ENCODE measurements at regions of chr5 and their contacts with region 1.

Region 1: DNA sequence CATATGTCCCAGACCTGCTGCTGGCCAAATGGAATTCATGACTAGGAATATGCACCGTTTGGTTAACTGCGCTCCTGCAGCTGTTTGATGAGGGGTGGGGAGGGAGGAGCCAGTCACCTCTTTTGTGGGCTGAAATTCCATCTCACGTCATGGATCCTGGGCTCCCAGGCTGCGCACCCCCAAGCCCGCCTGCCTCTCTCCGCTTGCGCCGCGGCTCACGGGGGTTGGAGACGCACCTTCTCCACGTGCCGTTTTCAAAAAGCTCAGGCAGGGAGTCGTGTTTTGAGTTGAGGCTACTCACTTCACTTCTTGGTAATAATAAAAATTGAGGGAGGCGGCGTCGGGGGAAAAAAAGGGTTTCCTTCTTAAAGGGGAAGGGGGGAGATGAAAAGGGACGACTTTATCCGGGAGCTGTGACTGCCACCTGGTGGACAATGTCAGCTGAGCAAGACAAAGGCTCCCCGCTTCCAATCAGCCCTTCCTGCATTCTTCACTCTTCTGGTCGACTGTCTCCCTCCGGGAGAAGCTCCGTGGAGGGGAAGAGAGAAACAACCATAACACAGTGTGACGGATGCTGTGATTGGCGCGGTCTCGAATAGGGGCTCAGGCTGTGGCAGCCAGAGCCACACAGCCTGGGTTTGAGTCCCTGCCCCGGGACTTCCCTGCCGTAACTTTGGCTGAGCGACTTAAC is 15.9 kb upstream of the C5orf47 start:
- DNase-seq: peak; percentile 54
- H3K4me3 ChIP-seq: peak overlapping the region; percentile 42 to 48 (median 43)
- H3K27ac ChIP-seq: no peak overlapping the region
- H3K4me1 ChIP-seq: peaks cover 7% of the 10 kb centered on the region
- H3K27me3 ChIP-seq: no peaks in the 10 kb centered on the region
- CTCF ChIP-seq: peak; percentile 80 to 84

Region 2: DNA sequence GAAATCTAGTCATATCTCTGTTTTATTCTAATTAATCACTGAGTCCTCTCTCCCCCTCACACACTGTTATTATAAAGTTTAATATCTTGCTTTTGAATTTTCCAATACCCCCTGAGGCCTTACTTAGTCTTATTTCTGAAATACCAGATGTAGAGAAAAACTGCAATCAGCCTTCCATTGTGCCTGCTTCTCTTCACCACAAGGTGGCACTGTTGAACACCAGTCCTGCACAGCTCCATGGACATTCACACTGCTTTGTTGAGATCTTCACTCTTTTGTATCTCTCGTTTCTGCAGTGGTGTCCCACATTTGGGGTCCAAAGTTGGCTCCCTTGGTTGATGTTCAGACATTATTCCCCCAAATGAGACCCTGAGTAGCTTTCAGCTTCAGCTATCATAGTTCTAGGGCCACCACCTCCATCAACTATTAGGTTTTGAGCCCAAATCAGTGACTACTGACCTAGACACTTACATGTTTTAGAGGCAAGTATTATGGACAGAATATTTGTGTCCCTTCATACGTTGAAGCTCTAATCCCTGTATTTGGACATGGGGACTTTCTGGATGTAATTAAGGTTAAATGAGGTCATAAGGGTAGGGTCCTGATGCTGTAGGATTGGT is 380.9 kb before region 1 on chr5:
- CTCF ChIA-PET with region 1: no interaction called
- dilution Hi-C with region 1: no loop called
- in situ Hi-C with region 1: no loop called
- intact Hi-C with region 1: loop called (anchors 1 kb)
- DNase-seq: peak; percentile 6
- H3K4me3 ChIP-seq: no peak overlapping the region
- H3K27ac ChIP-seq: no peak overlapping the region
- H3K4me1 ChIP-seq: no peaks in the 10 kb centered on the region
- H3K27me3 ChIP-seq: no peaks in the 10 kb centered on the region
- CTCF ChIP-seq: peak; percentile 51 to 76

Region 3: DNA sequence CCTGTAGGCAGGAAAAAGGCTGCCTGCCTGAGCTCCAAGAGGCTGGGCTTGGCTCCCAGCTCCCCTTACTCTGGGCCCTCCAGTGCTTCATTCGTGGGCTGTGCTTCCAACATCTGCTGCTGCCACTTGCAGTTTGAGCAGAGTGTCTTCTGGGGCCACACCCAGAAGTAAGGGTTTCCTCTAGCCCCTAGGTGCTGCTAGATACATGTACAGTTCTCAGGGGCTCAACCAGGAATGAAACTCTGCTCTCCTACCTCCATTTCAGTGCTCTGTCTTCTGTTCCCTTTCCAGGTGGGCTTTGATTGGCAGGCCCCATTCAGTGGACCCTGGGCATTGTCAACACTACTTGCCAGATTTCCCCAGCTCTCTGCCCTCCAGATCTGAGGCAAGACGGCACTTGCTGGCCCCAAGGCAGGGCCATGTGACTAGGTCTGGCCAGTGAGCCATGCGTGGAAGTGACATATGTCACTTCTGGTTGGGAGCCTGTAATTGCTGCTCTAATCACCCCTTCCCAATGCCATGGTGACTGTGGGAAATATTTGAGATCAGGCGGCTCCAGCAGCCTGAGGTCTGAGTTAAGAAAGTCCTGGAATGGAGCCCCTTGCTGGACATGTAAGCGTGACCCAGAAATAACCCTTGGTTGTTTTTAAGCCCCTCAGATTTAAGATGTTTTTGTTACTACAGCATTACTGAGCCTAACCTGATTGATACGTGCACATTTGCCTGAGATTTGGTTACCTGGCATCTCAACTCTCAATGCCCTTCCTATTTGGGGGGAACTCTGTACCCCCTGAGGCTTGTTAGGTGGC is 347.2 kb before region 1 on chr5:
- CTCF ChIA-PET with region 1: no interaction called
- dilution Hi-C with region 1: loop called (anchors 25 kb)
- in situ Hi-C with region 1: loop called in 1 of 2 experiments (anchors 5 kb)
- intact Hi-C with region 1: loop called (anchors 1 kb)
- DNase-seq: no peak
- H3K4me3 ChIP-seq: no peak overlapping the region
- H3K27ac ChIP-seq: no peak overlapping the region
- H3K4me1 ChIP-seq: no peaks in the 10 kb centered on the region
- H3K27me3 ChIP-seq: no peaks in the 10 kb centered on the region
- CTCF ChIP-seq: peak in 1 of 2 donors; percentile 35

Region 4: GRCh38 chr5:173812811-173813550 is 160.1 kb before region 1 on chr5:
- CTCF ChIA-PET with region 1: no interaction called
- dilution Hi-C with region 1: no loop called
- in situ Hi-C with region 1: no loop called
- intact Hi-C with region 1: loop called (anchors 5 kb)
- DNase-seq: peak; percentile 27
- H3K4me3 ChIP-seq: no peak overlapping the region
- H3K27ac ChIP-seq: no peak overlapping the region
- H3K4me1 ChIP-seq: no peaks in the 10 kb centered on the region
- H3K27me3 ChIP-seq: no peaks in the 10 kb centered on the region
- CTCF ChIP-seq: no peak

Region 5: GRCh38 chr5:173917788-173918786 is 55.0 kb before region 1 on chr5:
- CTCF ChIA-PET with region 1: no interaction called
- dilution Hi-C with region 1: no loop called
- in situ Hi-C with region 1: no loop called
- intact Hi-C with region 1: loop called (anchors 2 kb)
- DNase-seq: peak; percentile 85
- H3K4me3 ChIP-seq: peak overlapping the region; percentile 45 to 75 (median 52)
- H3K27ac ChIP-seq: peak overlapping the region; percentile 97
- H3K4me1 ChIP-seq: peaks cover 16% of the 10 kb centered on the region
- H3K27me3 ChIP-seq: no peaks in the 10 kb centered on the region
- CTCF ChIP-seq: peak in 1 of 2 donors; percentile 37